Common myeloid progenitor, CD34-positive (primary cell): ENCODE measurements at regions of chr17 and their contacts with region 1.

Region 1: DNA sequence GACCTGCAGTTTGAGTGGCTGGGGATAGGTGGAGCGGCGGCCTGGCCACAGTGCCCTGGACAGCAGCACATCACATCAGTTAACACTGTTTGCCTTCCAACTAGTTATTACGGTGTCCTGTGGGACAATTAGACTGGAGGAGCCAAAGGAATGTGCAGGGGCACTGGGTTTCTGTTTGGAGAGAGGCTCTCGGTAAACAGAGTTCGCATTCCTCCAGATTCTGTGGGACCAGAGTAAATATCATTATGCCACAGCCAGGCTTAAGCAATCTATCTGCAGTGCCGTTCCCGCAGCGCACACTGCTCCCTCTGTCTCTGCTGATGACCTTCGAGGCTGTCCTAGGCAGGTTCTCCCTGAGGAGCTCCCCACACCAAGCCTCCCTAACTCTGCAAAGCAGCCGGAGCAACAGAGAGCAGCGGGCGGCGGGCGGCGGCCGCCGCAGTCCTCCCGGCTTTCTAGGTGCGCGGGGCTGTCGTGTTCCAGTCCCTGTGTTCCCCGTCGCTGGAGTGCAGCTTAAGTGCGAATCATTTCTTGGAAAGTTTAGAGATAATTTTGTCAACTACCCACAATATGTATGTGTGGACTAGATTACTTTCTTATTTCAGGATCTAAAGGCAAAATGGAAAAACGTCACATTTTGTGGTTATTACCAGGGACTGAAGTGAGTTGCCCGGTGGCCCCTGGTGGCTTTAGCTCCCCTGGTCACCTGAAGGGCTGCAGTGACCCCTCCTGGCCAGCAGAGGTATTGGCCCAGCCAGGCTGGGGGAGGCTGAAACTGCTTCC is 43.2 kb downstream of the PGS1 start:
- DNase-seq: peak; percentile 76 to 82 (median 77)
- H3K4me3 ChIP-seq: no peak overlapping the region
- H3K27ac ChIP-seq: no peak overlapping the region
- H3K4me1 ChIP-seq: peaks cover 4 to 15% (median 13%) of the 10 kb centered on the region in 4 experiments
- H3K27me3 ChIP-seq: no peaks in the 10 kb centered on the region

Region 2: GRCh38 chr17:78289802-78290363 is 131.8 kb before region 1 on chr17:
- CTCF ChIA-PET with region 1: interaction called, 47 read pairs
- POLR2A ChIA-PET with region 1: no interaction called
- DNase-seq: peak; percentile 89 to 94 (median 94)
- H3K4me3 ChIP-seq: no peak overlapping the region
- H3K27ac ChIP-seq: no peak overlapping the region
- H3K4me1 ChIP-seq: peaks cover 0 to 38% (median 28%) of the 10 kb centered on the region in 4 experiments
- H3K27me3 ChIP-seq: no peaks in the 10 kb centered on the region

Region 3: DNA sequence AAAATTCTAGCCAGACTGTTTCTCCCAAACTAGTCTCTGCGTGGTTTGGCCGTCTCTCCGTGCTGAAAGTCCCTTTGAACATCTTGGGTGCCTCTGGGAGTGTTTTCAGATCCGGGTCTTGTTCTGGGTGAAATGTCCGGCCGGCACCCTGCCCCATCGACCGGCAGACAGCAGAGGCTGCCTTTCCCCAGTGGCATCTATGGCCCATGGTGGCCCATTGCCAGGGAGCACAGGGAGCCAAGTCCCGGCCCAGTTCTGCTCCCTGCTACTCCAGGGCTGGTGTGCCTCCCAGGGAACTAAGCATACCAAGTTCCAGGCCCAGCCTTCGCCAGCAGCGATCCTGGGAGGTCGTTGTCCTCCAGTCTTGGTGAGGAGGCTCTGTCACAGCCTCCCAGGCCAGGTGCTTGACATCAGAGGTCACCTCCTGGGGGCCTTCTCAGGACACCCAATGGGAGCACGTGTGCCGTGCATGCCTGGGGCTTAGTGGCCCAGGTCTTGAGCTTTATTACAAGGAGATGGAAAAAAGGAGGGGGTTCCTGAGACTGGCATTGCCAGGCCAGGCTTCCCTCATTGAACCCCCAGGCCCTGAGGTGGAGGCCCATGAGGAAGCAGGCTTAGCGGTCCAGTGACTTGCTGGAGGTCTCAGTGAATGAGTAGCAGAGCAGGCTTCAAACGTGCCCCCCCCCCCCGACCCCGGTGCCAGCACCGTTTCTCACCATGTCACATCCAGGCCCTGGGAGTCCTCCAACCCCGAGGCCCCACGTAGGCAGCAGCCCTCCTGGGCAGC is 10.7 kb after region 1 on chr17:
- CTCF ChIA-PET with region 1: interaction called, 10 read pairs
- POLR2A ChIA-PET with region 1: no interaction called
- DNase-seq: no peak
- H3K4me3 ChIP-seq: no peak overlapping the region
- H3K27ac ChIP-seq: no peak overlapping the region
- H3K4me1 ChIP-seq: peaks cover 0 to 3% (median 0%) of the 10 kb centered on the region in 4 experiments
- H3K27me3 ChIP-seq: no peaks in the 10 kb centered on the region